Mammary epithelial cell (primary cell): ENCODE measurements at regions of chr20 and their contacts with region 1.

Region 1: DNA sequence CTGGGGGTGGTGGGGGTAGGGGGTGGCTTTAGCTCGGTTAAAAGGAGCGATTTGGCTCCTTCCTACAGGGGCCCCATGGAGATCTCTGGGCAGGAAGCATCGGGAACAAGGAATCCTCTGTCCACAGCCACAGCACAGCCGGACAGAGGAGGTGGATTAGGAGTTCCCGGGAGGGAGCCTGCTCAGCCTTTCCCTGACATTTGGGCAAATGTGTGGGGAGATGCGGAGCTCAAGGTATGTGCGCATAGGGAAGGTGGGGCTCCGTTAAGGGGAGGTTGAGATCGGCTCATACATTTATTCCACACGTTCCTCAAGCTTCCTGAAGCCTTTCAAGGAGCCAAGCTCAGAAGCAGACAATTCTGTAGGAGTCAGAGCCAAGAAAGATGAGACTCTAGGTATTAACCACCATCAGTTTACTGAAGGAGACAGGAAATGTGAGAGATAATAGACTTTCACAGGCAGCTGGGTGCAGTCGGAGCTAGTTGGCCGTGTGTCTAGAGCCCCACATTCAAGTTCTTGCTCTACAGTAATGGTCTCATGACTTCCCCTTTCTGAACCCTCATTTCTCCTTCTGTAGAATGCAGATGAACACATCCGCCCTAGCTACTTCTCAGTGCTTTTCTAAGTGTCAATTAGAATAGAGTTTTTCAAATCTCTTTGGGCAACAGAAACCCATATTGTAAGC is 40.8 kb upstream of the EPB41L1 start:
- DNase-seq: no peak
- H3K4me3 ChIP-seq: no peak overlapping the region
- H3K27ac ChIP-seq: no peak overlapping the region
- H3K4me1 ChIP-seq: peaks cover 4% of the 10 kb centered on the region
- H3K27me3 ChIP-seq: no peaks in the 10 kb centered on the region
- CTCF ChIP-seq: no peak

Region 2: GRCh38 chr20:35791821-35792220 is 321.9 kb before region 1 on chr20:
- CTCF ChIA-PET with region 1: no interaction called
- dilution Hi-C with region 1: no loop called
- in situ Hi-C with region 1: no loop called
- intact Hi-C with region 1: no loop called
- DNase-seq: peak; percentile 43
- H3K4me3 ChIP-seq: no peak overlapping the region
- H3K27ac ChIP-seq: no peak overlapping the region
- H3K4me1 ChIP-seq: no peaks in the 10 kb centered on the region
- H3K27me3 ChIP-seq: no peaks in the 10 kb centered on the region
- CTCF ChIP-seq: no peak

Region 3: GRCh38 chr20:36028106-36028826 is 85.4 kb before region 1 on chr20:
- CTCF ChIA-PET with region 1: no interaction called
- dilution Hi-C with region 1: loop called (anchors 5 kb)
- in situ Hi-C with region 1: no loop called
- intact Hi-C with region 1: no loop called
- DNase-seq: no peak
- H3K4me3 ChIP-seq: no peak overlapping the region
- H3K27ac ChIP-seq: no peak overlapping the region
- H3K4me1 ChIP-seq: no peaks in the 10 kb centered on the region
- H3K27me3 ChIP-seq: no peaks in the 10 kb centered on the region
- CTCF ChIP-seq: no peak